Gastrocnemius medialis (tissue), 4 donors: ENCODE measurements at regions of chr4 and their contacts with region 1.

Region 1: DNA sequence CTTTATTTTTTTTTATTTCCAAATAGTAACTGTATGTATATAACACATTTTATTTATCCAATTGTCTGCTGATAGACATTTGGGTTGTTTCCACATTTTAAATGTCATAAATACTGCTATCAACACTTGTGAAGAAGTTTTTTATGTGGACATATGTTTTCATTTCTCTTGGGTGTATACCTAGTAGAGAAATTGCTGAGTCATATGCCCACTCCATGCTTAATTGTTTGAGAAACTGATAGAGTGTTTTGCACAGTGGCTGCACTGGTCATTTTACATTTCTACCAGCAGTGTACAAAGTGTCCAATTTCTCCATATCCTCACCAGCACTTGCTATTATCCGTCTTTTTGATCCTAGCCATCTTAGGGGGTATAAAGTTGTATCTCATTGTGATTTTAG is 567.8 kb downstream of the GBA3 start:
- DNase-seq: no peak
- ATAC-seq: no peak
- H3K4me3 ChIP-seq: no peak overlapping the region
- H3K27ac ChIP-seq: no peak overlapping the region
- H3K4me1 ChIP-seq: no peaks in the 10 kb centered on the region
- H3K27me3 ChIP-seq: no peaks in the 10 kb centered on the region
- CTCF ChIP-seq: no peak
- POLR2A ChIP-seq: no peak

Region 2: GRCh38 chr4:23242962-23243361 is 17.5 kb before region 1 on chr4:
- in situ Hi-C with region 1: no loop called
- intact Hi-C with region 1: loop called (anchors 2 kb)
- DNase-seq: no peak
- ATAC-seq: no peak
- H3K4me3 ChIP-seq: no peak overlapping the region
- H3K27ac ChIP-seq: peak overlapping the region in 1 of 4 donors; percentile 2
- H3K4me1 ChIP-seq: peaks cover under 1 to 13% of the 10 kb centered on the region in 2 donors
- H3K27me3 ChIP-seq: no peaks in the 10 kb centered on the region
- CTCF ChIP-seq: no peak
- POLR2A ChIP-seq: no peak